Right ventricle myocardium inferior (tissue), 1 donor: ENCODE measurements at regions of chr2 and their contacts with region 1.

Region 1: DNA sequence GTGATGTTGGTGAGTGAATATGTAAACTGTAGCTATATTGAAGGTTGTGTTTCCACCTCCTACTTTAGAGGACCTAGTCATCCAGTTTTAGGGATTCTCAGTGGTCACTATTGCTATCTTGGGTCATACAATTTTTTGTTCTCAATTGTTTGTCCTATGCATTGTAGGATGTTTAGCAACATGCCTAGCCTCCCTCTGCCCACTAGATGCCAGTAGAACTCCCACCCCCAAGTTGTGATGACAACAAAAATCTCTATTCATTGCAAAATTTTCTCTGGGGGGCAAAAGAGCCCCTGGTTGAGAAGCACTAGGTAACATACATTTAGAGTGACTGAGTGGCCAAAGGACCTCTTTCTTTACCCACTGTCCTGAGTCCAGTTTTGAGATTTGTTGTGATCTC is 87.3 kb downstream of the LRRTM4 start:
- DNase-seq: no peak
- ATAC-seq: no peak

Region 2: DNA sequence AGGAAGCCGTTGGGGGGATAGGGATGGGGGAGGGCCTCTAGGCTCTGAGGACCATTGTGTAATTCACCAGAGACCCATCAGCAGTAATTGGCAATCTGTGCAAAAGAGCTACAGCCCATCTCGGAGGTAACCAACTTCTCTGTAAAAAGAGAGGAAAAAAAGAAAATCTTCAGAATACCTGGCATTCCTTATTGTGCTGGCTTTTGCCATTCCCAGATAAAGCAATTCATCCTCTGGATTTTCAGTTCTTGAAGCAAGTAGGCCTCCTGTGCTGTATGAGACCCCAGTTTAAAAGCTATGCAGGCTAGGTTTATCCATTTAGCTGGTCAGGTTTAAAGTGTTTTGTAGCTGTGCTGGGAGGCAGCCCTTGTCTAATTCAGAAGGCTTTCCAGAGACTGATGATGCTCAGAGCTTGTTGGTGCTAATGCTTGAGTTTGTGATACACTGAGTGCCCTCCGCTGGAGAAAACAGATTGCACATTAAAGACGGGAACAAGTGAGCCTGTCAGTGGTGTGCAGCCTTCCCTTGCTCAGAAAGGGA is 87.1 kb after region 1 on chr2 and contains the start of gene LRRTM4:
- intact Hi-C with region 1: loop called (anchors 1 kb)
- DNase-seq: no peak
- ATAC-seq: peak; percentile 88
- total RNA-seq, gene LRRTM4: 0.92 TPM